ENCODE measurements at regions of chr12 and their contacts with region 1.

Region 1: DNA sequence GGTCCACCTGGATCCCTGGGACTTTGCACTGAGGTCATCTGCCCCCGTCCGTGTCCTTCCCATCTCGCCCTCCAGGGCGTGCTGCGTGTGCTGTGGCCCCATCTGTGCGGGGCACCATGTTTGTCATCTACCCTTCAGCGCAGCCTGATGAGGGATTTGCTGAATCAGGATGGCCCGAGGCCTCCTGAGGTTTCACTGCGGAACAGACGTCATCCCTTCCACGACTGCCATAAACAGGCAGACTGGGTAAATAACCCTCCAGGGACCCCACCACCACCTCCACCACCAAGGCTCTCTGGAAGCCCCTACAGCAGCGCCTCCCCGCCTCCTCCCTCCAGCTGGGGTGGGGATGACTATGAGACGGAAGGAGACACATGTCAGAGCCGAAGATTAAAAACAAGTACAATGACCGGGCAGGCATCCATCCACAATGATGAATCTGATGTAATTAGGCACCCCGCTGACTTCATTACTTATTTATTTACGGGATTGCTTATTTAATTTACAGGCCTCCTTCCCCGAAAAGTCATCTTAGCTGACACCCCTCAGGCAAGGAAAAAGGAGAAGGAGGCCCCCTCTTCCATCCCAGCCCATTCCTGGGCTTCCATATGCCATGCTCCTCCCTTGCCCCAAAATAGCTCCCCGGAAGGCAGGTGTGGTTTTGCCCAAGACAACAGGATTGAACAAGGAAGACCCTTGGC is 39.4 kb downstream of the NCOR2 start:
- DNase-seq: no peak
- ATAC-seq: peak in 7 of 8 donors; percentile 14 to 43 (median 22)
- H3K4me3 ChIP-seq: no peak overlapping the region
- H3K27ac ChIP-seq: peak overlapping the region in 7 of 10 donors; percentile 31 to 72 (median 44)
- H3K4me1 ChIP-seq: peaks cover 9 to 84% (median 38%) of the 10 kb centered on the region in 9 donors
- H3K27me3 ChIP-seq: no peaks in the 10 kb centered on the region
- CTCF ChIP-seq: no peak

Region 2: DNA sequence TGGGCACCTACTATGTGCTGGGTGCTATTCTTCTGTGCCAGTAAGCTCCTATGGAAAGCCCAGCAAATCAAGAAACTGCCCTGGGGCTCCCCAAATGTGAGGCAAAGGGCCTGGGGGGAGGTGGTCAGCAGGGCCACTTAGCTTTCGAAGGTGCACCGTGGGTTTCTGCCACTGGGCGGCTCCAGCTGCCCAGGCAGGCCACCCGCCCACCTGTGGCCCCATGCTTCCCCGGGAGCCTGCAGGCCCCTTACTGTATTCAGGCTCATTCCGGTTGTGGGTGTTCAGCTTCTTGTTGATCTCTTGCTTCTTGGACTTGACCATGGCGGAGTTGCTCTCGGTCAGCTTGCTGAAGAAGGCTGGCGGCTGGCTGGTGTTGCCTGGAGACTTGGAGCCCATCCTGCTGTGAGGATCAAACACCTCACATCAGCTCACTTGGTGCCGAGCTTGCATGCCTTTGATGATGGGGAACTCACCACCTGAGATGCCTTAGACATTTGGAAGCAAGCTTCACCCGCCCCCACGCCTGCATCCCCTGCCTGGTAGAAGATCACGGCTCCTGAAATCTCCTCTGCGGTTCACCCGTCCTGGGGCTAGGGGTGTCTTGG is 195.8 kb before region 1 on chr12:
- intact Hi-C with region 1: no loop called
- DNase-seq: no peak
- ATAC-seq: no peak
- H3K4me3 ChIP-seq: no peak overlapping the region
- H3K27ac ChIP-seq: no peak overlapping the region
- H3K4me1 ChIP-seq: peaks cover 0 to 17% (median 12%) of the 10 kb centered on the region in 9 donors
- H3K27me3 ChIP-seq: no peaks in the 10 kb centered on the region
- CTCF ChIP-seq: peak in 3 of 9 donors; percentile 10 to 19 (median 12)

Region 3: GRCh38 chr12:124493809-124494750 is 33.9 kb before region 1 on chr12:
- intact Hi-C with region 1: no loop called
- DNase-seq: peak in 1 of 2 donors; percentile 15
- ATAC-seq: no peak
- H3K4me3 ChIP-seq: no peak overlapping the region
- H3K27ac ChIP-seq: no peak overlapping the region
- H3K4me1 ChIP-seq: peaks cover 25 to 99% (median 77%) of the 10 kb centered on the region in 9 donors
- H3K27me3 ChIP-seq: no peaks in the 10 kb centered on the region
- CTCF ChIP-seq: no peak

Region 4: DNA sequence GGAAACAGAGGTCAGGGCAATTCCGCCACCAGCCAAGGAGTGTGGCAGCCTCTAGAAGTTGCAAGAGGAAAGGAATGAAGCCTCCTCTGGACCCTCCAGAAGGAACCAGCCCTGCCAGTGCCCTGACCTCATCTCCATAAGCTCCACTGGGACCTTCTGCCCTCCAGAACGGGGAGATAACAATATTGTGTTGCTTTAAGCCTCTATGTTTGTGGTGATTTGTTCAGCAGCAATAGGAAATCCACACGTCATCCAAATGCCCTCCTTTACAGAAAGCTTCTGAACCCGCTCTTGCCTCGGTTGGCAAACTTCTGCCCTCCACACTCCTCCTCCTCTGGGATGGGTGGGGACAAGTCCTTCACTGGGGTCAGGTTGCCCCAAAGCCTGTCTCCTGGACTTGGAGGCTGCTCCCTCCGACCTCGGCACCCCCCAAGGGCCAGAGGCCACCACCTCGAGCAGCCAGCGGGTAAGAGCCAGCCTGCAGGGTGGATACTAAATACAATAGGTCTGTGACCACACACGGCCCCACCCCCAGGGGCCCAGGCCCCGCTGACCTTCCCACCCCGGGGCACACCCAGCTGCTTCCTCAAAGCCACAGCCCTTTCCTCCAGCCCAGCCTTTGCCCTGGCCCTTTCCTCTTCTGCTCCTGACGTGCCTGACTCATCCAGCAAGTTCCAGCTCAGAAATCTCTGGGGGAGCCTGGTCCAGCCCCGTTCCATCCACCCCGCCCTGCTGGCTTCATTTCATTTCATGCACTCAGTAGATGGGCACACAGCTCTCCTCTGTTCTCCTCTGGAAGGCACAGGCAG is 98.1 kb after region 1 on chr12:
- intact Hi-C with region 1: loop called in 2 of 10 experiments (anchors 5 kb)
- DNase-seq: peak; percentile 91
- ATAC-seq: peak; percentile 84 to 97 (median 92)
- H3K4me3 ChIP-seq: peak overlapping the region in 1 of 10 donors; percentile 24
- H3K27ac ChIP-seq: peak overlapping the region; percentile 65 to 95 (median 83)
- H3K4me1 ChIP-seq: peaks cover 13 to 64% (median 41%) of the 10 kb centered on the region in 9 donors
- H3K27me3 ChIP-seq: no peaks in the 10 kb centered on the region
- CTCF ChIP-seq: no peak